CD4-positive, alpha-beta memory T cell (primary cell): ENCODE measurements at regions of chrX and their contacts with region 1.

Region 1: GRCh38 chrX:75603833-75604232 is 81.0 kb upstream of the ZDHHC15 start:
- DNase-seq: peak in 4 of 5 donors; percentile 26 to 35 (median 30)
- H3K4me3 ChIP-seq: no peak overlapping the region
- H3K4me3 Mint-ChIP-seq: no peak overlapping the region
- H3K27ac ChIP-seq: no peak overlapping the region
- H3K27ac Mint-ChIP-seq: no peak overlapping the region
- H3K4me1 ChIP-seq: no peaks in the 10 kb centered on the region
- H3K4me1 Mint-ChIP-seq: no peaks in the 10 kb centered on the region
- H3K27me3 ChIP-seq: no peaks in the 10 kb centered on the region
- H3K27me3 Mint-ChIP-seq: peaks cover 0 to 2% of the 10 kb centered on the region in 2 donors

Region 2: DNA sequence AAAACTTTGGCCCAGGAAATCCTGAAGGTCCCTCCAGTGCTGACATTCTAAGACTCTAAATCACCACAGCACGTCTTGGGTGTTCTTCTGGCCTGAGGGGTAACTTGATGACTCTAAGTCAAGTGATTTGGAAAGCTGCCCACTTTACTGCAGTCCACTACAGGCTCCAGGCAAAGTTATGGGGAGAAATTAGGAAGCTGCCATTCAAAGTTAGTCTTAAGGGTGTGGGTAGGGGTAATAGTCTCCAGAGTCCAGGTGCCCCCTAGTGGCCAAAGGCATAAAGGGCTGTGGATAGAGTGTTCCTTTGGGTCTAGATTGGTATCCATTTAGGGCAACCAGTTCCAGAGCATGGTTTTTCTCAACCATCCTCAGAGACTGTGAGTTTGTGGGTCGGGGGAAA is 1221.2 kb before region 1 on chrX:
- CTCF ChIA-PET with region 1: no interaction called
- POLR2A ChIA-PET with region 1: no interaction called
- intact Hi-C with region 1: loop called (anchors 2 kb)
- DNase-seq: peak; percentile 34 to 50 (median 45)
- H3K4me3 ChIP-seq: no peak overlapping the region
- H3K4me3 Mint-ChIP-seq: no peak overlapping the region
- H3K27ac ChIP-seq: no peak overlapping the region
- H3K27ac Mint-ChIP-seq: no peak overlapping the region
- H3K4me1 ChIP-seq: no peaks in the 10 kb centered on the region
- H3K4me1 Mint-ChIP-seq: no peaks in the 10 kb centered on the region
- H3K27me3 ChIP-seq: no peaks in the 10 kb centered on the region
- H3K27me3 Mint-ChIP-seq: peaks cover 0 to 3% of the 10 kb centered on the region in 2 donors

Region 3: DNA sequence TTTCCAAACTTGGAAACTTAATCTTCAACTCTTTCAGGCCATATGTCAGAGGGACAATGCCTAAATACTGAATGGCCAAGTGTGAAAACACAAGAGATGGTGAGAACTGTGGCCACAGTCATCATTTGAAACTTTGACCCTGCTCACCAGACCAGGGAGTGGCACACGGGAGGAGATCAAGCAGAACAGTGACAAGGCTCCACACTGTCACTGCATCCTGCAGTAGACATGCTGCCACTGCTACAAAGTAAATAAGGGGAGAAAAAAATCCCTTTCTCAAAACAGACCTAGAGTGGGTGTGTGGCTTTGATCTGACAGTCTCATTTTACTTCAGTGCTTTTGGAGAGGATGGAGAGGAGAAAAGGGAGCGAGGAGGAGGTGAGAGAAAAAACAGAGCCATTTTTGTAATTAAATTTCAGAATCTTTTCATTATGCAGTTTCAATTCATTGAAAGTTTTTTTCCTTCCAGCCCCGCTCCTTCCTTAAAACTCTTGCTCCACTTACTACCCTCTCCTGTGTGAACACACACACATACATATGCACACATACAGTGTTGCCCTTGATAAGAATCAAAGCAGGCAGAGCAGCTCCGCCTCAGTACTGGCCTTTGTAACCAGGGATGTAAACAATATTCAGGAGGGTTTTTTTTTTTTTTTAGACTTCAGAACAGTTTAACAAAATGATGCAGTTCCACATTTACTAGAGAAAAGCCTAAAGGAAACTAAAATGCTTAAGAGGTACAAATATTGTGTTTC is 713.0 kb before region 1 on chrX:
- CTCF ChIA-PET with region 1: no interaction called
- POLR2A ChIA-PET with region 1: no interaction called
- intact Hi-C with region 1: no loop called
- DNase-seq: no peak
- H3K4me3 ChIP-seq: no peak overlapping the region
- H3K4me3 Mint-ChIP-seq: peak overlapping the region in 1 of 8 donors; percentile 47
- H3K27ac ChIP-seq: no peak overlapping the region
- H3K27ac Mint-ChIP-seq: no peak overlapping the region
- H3K4me1 ChIP-seq: no peaks in the 10 kb centered on the region
- H3K4me1 Mint-ChIP-seq: no peaks in the 10 kb centered on the region
- H3K27me3 ChIP-seq: no peaks in the 10 kb centered on the region
- H3K27me3 Mint-ChIP-seq: no peaks in the 10 kb centered on the region

Region 4: DNA sequence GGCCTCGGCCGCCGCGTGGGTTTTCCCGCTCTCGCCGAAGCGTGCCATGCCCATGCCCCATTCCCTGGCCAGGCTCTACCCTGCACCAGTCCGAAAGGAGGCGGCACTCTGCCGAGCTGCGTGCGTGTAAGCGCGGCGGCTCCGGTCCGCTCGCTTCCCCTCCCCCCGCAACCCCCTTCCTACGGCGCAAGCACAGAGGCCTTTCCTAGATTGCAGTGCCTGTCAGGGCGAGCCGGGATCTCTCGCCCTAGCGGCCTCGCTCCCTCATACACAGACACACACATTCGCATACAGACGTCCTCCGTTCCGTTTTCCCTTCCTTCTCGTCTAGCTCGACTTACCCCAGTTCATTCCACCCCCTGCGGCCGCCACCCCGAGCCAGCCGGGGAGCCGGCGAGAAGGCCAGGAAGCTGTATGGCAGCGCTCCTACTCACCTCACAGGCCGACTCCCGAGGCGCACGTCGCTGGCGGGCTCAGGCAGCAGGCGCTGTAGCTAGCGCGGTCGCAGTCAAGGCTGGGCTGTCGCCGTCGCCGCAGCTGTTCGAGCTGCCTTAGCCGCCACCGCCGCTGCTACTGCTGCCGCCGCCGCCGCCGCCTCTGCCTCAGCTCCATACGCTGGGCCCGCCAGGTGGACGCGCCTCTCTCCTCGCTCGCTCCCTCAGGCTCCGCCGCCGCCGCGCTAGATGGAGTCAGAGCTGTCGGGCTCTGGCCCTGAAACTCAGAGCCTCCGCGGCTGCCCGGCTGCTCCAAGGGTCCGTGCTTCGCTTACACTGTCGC is 679.2 kb before region 1 on chrX:
- CTCF ChIA-PET with region 1: no interaction called
- POLR2A ChIA-PET with region 1: no interaction called
- intact Hi-C with region 1: loop called (anchors 10 kb)
- DNase-seq: peak; percentile 18 to 45 (median 29)
- H3K4me3 ChIP-seq: peak overlapping the region in 1 of 2 donors; percentile 40
- H3K4me3 Mint-ChIP-seq: peak overlapping the region; percentile 79 to 98 (median 88)
- H3K27ac ChIP-seq: peak overlapping the region; percentile 4
- H3K27ac Mint-ChIP-seq: peak overlapping the region in 6 of 7 donors; percentile 31 to 74 (median 47)
- H3K4me1 ChIP-seq: no peaks in the 10 kb centered on the region
- H3K4me1 Mint-ChIP-seq: peaks cover 0 to 8% (median 3%) of the 10 kb centered on the region in 4 donors
- H3K27me3 ChIP-seq: no peaks in the 10 kb centered on the region
- H3K27me3 Mint-ChIP-seq: peaks cover 3 to 7% of the 10 kb centered on the region in 2 donors

Region 5: GRCh38 chrX:76253432-76253831 is 649.6 kb after region 1 on chrX:
- CTCF ChIA-PET with region 1: no interaction called
- POLR2A ChIA-PET with region 1: no interaction called
- intact Hi-C with region 1: loop called (anchors 10 kb)
- DNase-seq: peak; percentile 32 to 45 (median 41)
- H3K4me3 ChIP-seq: no peak overlapping the region
- H3K4me3 Mint-ChIP-seq: no peak overlapping the region
- H3K27ac ChIP-seq: no peak overlapping the region
- H3K27ac Mint-ChIP-seq: peak overlapping the region in 1 of 7 donors; percentile 4
- H3K4me1 ChIP-seq: no peaks in the 10 kb centered on the region
- H3K4me1 Mint-ChIP-seq: peaks cover 0 to 1% (median 0%) of the 10 kb centered on the region in 4 donors
- H3K27me3 ChIP-seq: no peaks in the 10 kb centered on the region
- H3K27me3 Mint-ChIP-seq: no peaks in the 10 kb centered on the region